GM10248 (cell line): ENCODE measurements at regions of chr16 and their contacts with region 1.

Region 1: GRCh38 chr16:75238132-75238852 is 13.1 kb downstream of the BCAR1 start:
- DNase-seq: no peak
- CTCF ChIP-seq: no peak

Region 2: GRCh38 chr16:74842413-74842812 is 395.9 kb before region 1 on chr16:
- CTCF ChIA-PET with region 1: no interaction called
- POLR2A ChIA-PET with region 1: no interaction called
- DNase-seq: no peak
- CTCF ChIP-seq: no peak

Region 3: GRCh38 chr16:75206749-75207451 is 31.4 kb before region 1 on chr16 and contains the start of gene CTRB2:
- CTCF ChIA-PET with region 1: interaction called, 44 read pairs
- POLR2A ChIA-PET with region 1: no interaction called
- DNase-seq: peak; percentile 65
- CTCF ChIP-seq: no peak

Region 4: DNA sequence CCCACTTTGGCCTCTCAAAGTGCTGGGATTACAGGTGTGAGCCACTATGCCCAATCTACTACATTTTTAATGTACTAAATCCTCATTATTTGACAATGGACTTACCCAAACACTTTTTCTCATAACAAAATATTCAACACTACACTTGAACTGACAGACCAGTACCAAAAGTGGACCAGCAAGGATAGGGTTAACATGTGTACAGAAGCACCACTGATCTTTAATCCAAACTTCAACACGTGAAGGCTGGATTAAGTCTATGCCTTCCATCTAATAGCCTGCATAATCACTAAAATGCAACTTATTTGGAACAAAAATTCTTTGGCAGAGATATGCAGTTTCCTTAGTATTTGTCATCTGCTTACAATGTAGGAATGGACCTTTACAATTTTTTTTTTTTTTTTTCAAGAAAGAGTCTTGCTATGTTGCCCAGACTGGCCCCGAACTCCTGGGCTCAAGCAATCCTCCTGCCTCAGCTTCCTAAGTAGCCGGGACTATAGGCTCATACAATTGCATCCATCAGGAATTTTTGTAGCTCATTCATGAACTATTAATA is 73.2 kb after region 1 on chr16:
- CTCF ChIA-PET with region 1: interaction called, 10 read pairs
- POLR2A ChIA-PET with region 1: no interaction called
- DNase-seq: no peak
- CTCF ChIP-seq: no peak

Region 5: GRCh38 chr16:75379911-75380847 is 141.9 kb after region 1 on chr16:
- CTCF ChIA-PET with region 1: interaction called, 61 read pairs
- POLR2A ChIA-PET with region 1: no interaction called
- DNase-seq: peak; percentile 64
- CTCF ChIP-seq: no peak

Region 6: GRCh38 chr16:75392911-75393310 is 154.6 kb after region 1 on chr16:
- CTCF ChIA-PET with region 1: interaction called, 61 read pairs
- POLR2A ChIA-PET with region 1: no interaction called
- DNase-seq: no peak
- CTCF ChIP-seq: no peak

Region 7: GRCh38 chr16:75415169-75415905 is 177.0 kb after region 1 on chr16:
- CTCF ChIA-PET with region 1: interaction called, 15 read pairs
- POLR2A ChIA-PET with region 1: no interaction called
- DNase-seq: no peak
- CTCF ChIP-seq: no peak